Heart left ventricle (tissue), 16 donors: ENCODE measurements at regions of chr5 and their contacts with region 1.

Region 1: GRCh38 chr5:23820765-23821471 is 313.5 kb downstream of the PRDM9 start:
- DNase-seq: no peak
- ATAC-seq: peak in 2 of 4 donors; percentile 36 to 53
- H3K4me3 ChIP-seq: no peak overlapping the region
- H3K27ac ChIP-seq: no peak overlapping the region
- H3K4me1 ChIP-seq: no peaks in the 10 kb centered on the region
- H3K27me3 ChIP-seq: no peaks in the 10 kb centered on the region
- CTCF ChIP-seq: peak in 6 of 12 donors; percentile 18 to 41 (median 30)
- POLR2A ChIP-seq: no peak

Region 2: GRCh38 chr5:24103470-24104023 is 282.6 kb after region 1 on chr5:
- intact Hi-C with region 1: loop called in 1 of 10 experiments (anchors 10 kb)
- DNase-seq: no peak
- ATAC-seq: no peak
- H3K4me3 ChIP-seq: no peak overlapping the region
- H3K27ac ChIP-seq: no peak overlapping the region
- H3K4me1 ChIP-seq: no peaks in the 10 kb centered on the region
- H3K27me3 ChIP-seq: no peaks in the 10 kb centered on the region
- CTCF ChIP-seq: no peak
- POLR2A ChIP-seq: no peak

Region 3: DNA sequence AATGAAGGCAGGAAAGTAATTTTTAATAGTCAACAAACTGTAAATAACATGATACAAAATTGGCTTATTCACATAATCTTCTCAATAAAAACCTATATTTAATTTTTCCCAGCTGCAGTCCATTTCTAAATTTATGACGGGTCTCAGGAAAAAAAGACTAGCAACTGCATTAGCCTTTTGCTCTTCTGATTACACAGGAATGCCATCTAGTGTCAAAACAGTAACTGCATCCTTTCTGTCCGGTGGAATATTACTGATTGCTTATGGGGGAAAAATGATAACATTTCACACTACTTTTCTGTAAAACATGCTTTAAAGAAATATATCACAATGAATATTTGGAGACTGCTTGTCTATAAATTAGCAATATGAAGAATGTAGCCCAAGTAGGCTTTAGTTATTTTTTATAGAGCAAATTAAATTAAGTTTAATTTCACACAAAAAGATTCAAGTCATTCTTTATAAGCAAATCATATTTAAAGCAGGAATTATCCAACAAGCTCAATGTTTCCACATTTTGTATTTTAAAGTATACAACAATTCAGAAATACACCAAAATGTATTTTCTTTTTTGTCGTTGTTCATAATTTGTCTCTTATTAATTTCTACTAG is 289.2 kb after region 1 on chr5:
- intact Hi-C with region 1: loop called in 3 of 10 experiments (anchors 5 to 10 kb)
- DNase-seq: no peak
- ATAC-seq: no peak
- H3K4me3 ChIP-seq: no peak overlapping the region
- H3K27ac ChIP-seq: no peak overlapping the region
- H3K4me1 ChIP-seq: no peaks in the 10 kb centered on the region
- H3K27me3 ChIP-seq: no peaks in the 10 kb centered on the region
- CTCF ChIP-seq: peak in 10 of 12 donors; percentile 9 to 53 (median 34)
- POLR2A ChIP-seq: no peak